GM10248 (cell line): ENCODE measurements at regions of chr12 and their contacts with region 1.

Region 1: GRCh38 chr12:120955232-120955631 is 23.1 kb upstream of the HNF1A start:
- DNase-seq: no peak
- CTCF ChIP-seq: no peak

Region 2: GRCh38 chr12:120909633-120910298 is 45.5 kb before region 1 on chr12:
- CTCF ChIA-PET with region 1: no interaction called
- POLR2A ChIA-PET with region 1: no interaction called
- DNase-seq: no peak
- CTCF ChIP-seq: no peak

Region 3: DNA sequence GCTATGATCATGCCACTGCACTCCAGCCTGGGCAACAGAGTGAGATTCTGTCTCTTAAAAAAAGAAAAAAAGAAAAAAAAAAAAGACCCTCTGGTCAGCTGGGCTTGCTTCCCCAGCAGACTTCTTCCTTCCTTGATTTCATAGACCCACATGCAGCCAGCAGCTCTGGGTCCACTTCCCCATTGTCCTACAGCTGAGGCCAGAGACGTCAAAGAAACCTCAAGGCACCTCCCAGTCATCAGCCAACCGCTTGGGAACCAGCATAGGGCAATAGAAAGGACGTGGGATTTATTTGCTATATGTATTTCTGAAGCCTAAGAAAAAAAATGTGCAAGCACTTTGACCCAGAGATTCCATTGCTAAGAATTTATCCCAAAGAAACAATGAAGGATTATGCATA is 15.7 kb before region 1 on chr12:
- CTCF ChIA-PET with region 1: interaction called, 20 read pairs
- POLR2A ChIA-PET with region 1: no interaction called
- DNase-seq: no peak
- CTCF ChIP-seq: no peak